MCF 10A (cell line): ENCODE measurements at regions of chr15 and their contacts with region 1.

Region 1: DNA sequence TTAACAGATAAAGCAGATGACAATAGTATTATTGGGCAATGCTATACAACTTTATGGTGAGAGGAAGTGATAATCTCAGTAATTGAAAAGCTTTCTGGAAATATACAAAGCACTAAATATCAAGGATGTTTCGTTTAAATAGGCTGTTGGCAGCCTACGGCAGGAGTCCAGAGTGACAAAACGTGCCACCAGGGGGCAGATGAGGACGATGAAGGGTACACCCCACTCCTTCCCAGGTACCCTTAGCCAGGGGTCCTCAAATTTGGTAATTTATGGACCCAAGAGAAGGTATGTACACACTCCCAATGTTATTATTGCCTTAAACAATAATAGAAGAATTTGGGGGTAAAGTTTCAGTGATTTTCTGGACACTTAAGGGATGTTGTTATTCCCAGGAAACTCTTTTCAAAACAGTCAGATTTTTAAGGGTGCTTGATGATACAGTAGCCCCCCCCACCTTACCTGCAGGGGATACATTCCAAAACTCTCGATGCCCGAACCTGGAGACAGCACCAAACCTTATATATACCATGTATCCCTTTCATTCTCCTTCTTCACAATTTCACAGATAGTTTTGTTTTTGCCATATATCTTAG is 1.4 kb upstream of the MAGEL2 start:
- DNase-seq: no peak
- H3K4me3 Mint-ChIP-seq: no peak overlapping the region
- H3K27ac Mint-ChIP-seq: no peak overlapping the region
- H3K4me1 Mint-ChIP-seq: no peaks in the 10 kb centered on the region
- H3K27me3 Mint-ChIP-seq: no peaks in the 10 kb centered on the region
- CTCF ChIP-seq: peak; percentile 24

Region 2: GRCh38 chr15:23857028-23857641 is 208.1 kb after region 1 on chr15:
- CTCF ChIA-PET with region 1: interaction called, 49 read pairs
- POLR2A ChIA-PET with region 1: no interaction called
- intact Hi-C with region 1: no loop called
- DNase-seq: no peak
- H3K4me3 Mint-ChIP-seq: no peak overlapping the region
- H3K27ac Mint-ChIP-seq: no peak overlapping the region
- H3K4me1 Mint-ChIP-seq: no peaks in the 10 kb centered on the region
- H3K27me3 Mint-ChIP-seq: no peaks in the 10 kb centered on the region
- CTCF ChIP-seq: peak; percentile 17

Region 3: GRCh38 chr15:23866832-23867231 is 217.8 kb after region 1 on chr15:
- CTCF ChIA-PET with region 1: interaction called, 7 read pairs
- POLR2A ChIA-PET with region 1: no interaction called
- intact Hi-C with region 1: loop called (anchors 2 kb)
- DNase-seq: no peak
- H3K4me3 Mint-ChIP-seq: no peak overlapping the region
- H3K27ac Mint-ChIP-seq: no peak overlapping the region
- H3K4me1 Mint-ChIP-seq: no peaks in the 10 kb centered on the region
- H3K27me3 Mint-ChIP-seq: no peaks in the 10 kb centered on the region
- CTCF ChIP-seq: no peak